Activated CD4-positive, alpha-beta memory T cell treated with anti-CD3 and anti-CD28 coated beads for 36 hours (primary cell): ENCODE measurements at regions of chr5 and their contacts with region 1.

Region 1: DNA sequence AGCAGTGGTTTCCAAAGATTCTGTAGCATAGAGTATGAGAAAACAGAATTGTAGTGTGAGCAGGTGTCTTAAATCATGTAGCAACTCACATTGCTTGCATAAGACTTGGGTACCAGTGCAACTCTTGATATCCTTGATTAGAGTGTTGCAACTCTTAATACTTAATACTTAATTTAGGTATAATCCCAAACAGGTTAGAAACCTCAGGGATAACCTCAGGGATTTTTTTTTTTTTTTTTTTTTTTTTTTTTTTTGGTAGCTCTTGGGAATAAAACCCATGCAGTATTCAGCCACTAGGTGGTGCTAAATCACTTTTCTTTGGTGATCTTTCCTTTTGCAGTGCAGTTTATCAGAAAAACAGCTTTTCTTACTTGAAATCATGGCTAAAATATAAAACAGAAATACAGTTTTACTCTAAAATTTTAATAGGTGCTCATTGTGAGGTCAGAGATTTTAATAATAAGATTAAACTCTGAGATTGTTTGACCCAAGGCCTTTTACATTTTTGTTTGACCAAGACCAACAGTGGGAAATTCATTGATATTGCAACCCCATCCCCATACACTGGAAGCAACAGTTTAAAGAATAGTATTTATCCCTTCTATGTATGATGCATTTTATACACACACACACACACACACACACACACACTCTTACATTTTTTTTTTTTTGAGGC is 55.3 kb downstream of the ERAP1 start:
- DNase-seq: no peak
- H3K4me3 Mint-ChIP-seq: no peak overlapping the region
- H3K27ac Mint-ChIP-seq: no peak overlapping the region
- H3K4me1 Mint-ChIP-seq: peaks cover 15% of the 10 kb centered on the region
- H3K27me3 Mint-ChIP-seq: no peaks in the 10 kb centered on the region

Region 2: DNA sequence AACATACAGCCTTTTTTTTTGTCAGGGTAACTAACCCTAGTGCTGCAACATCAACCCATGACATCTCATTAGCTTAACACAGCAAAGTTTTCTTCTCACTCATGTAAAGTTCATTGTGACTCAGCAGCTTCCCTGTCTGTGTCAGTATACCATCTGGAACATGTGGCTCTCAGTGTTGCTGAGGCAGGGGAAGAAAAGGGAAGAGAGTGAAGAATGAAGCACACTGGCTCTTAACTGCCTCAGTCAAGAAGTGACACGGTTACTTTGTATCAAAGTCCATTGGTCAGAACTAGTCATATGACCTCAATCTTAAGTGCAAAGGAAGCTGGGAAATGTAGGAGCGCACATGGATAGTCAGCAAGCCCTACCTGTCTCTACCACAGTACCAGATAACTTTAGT is 605.8 kb before region 1 on chr5:
- CTCF ChIA-PET with region 1: no interaction called
- POLR2A ChIA-PET with region 1: no interaction called
- intact Hi-C with region 1: no loop called
- DNase-seq: peak; percentile 30
- H3K4me3 Mint-ChIP-seq: no peak overlapping the region
- H3K27ac Mint-ChIP-seq: no peak overlapping the region
- H3K4me1 Mint-ChIP-seq: peaks cover 4% of the 10 kb centered on the region
- H3K27me3 Mint-ChIP-seq: no peaks in the 10 kb centered on the region

Region 3: DNA sequence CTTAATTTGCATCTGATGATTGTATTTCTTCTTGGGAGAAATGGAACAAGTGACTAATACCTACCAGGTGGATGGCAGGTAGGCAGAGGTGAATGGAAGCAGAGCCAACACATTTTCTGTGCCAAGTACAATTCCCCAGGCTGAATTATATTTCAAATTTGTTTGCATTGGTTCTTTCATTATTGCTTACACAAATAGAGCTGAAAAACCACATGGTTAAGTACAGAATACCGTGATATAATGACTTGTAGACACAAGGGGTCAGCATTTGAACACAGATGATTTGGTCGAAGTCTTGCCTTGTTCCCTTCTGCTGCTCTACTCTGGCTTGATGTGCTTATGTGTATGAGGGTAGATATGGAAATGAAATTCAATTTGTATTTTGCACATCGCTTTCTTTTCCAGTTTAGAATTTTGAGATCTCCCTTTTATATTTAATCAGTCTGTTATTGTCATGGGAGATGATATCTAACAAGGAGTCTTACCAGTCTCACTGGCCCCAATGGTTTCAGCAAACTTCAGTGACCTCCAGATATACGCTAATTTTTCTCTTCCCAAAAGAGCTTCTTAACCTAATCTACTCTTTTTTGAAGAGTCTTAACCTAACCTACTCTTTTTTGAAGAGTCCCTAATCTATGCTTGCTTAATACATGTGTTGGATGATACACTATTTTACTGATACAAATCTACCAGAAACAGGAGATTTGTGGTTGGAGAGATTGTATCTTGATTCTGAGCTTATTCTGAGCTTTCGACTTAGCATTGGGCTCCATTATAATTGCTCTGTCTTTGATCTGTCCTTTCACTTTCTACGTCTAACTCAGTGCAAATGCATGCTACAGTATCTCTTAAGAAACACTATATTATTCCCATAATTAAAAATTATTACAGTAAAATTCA is 407.6 kb before region 1 on chr5:
- CTCF ChIA-PET with region 1: no interaction called
- POLR2A ChIA-PET with region 1: no interaction called
- intact Hi-C with region 1: loop called (anchors 10 kb)
- DNase-seq: no peak
- H3K4me3 Mint-ChIP-seq: no peak overlapping the region
- H3K27ac Mint-ChIP-seq: no peak overlapping the region
- H3K4me1 Mint-ChIP-seq: peaks cover 27% of the 10 kb centered on the region
- H3K27me3 Mint-ChIP-seq: peaks cover 26% of the 10 kb centered on the region

Region 4: DNA sequence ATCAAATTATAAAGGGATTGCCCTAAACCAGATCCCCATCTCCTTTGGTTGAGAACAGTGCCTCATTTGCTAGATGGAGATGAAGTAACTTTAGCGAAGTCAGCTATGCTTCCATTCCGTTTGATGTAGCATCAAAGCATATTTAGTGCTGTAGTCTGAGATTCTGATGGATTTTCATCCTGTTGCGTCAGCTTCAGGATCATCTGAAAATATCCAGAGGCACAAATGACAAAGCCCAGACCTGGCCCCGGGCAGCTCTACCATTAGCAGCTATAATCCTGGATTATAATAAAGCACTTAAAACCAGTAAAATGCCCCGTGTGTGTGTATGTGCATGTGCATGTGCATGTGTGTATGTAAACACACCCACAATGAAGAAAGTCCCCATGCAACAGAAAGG is 10.5 kb after region 1 on chr5:
- CTCF ChIA-PET with region 1: interaction called, 31 read pairs
- POLR2A ChIA-PET with region 1: no interaction called
- intact Hi-C with region 1: no loop called
- DNase-seq: no peak
- H3K4me3 Mint-ChIP-seq: no peak overlapping the region
- H3K27ac Mint-ChIP-seq: no peak overlapping the region
- H3K4me1 Mint-ChIP-seq: no peaks in the 10 kb centered on the region
- H3K27me3 Mint-ChIP-seq: no peaks in the 10 kb centered on the region

Region 5: DNA sequence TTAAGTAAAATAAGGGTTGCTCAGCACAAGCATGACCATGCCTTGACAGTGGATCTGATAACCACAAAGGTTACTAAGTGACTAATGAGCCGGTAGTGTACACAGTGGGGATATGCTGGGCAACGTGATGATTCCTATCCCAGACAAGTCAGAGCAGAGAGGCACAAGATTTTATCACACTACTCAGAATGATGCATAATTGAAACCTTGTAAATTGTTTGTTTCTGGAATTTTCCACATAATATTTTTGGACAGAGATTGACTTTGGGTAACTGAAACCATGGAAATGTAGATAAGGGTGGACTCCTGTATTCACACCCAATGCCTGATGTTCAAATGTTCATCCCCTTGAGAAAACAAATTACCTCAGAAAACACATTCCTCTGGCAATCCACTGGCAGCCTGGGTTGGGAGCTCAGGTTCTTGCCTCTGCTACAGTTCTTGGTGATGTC is 71.4 kb after region 1 on chr5:
- CTCF ChIA-PET with region 1: interaction called, 6 read pairs
- POLR2A ChIA-PET with region 1: no interaction called
- intact Hi-C with region 1: loop called (anchors 1 kb)
- DNase-seq: peak; percentile 46
- H3K4me3 Mint-ChIP-seq: no peak overlapping the region
- H3K27ac Mint-ChIP-seq: no peak overlapping the region
- H3K4me1 Mint-ChIP-seq: peaks cover 46% of the 10 kb centered on the region
- H3K27me3 Mint-ChIP-seq: no peaks in the 10 kb centered on the region

Region 6: DNA sequence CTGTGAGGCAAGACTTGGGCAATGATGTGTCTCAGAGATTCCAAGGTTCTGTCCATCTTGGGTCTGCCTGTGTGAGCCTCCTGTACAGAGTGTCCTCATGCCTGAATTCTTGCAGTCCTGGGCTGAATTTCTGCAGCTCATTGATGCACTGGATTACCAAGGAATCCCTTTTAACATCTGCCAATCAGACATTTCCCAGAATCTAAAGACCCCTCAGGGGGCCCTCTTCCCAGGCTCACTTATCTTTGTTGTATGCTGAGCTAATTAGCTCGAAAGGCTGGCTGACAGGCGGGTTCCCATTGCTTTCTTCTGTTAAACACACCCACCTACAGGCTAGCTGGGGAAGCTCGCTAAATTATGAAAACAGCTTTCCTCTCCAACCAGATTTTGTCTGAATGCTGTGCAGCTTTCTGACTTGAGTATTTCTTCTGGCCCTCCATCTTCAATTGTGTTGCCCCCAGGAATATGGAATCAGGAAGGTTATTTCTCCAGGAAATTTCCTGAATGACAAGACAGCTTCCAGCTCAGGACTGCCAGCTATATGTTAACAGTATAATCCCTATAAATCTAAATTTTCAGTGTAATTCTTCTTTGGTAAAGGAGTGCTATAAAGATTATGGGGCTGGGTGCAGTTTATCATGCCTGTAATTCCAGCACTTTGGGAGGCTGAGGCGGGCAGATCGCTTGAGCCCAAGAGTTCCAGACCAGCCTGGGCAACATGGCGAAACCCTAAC is 390.2 kb after region 1 on chr5 and contains the start of gene LIX1:
- CTCF ChIA-PET with region 1: interaction called, 15 read pairs
- POLR2A ChIA-PET with region 1: no interaction called
- intact Hi-C with region 1: no loop called
- DNase-seq: peak; percentile 43
- H3K4me3 Mint-ChIP-seq: no peak within 1 kb of the TSS
- H3K27ac Mint-ChIP-seq: no peak within 1 kb of the TSS
- H3K4me1 Mint-ChIP-seq: no peaks in the 10 kb centered on the region
- H3K27me3 Mint-ChIP-seq: peaks cover 4% of the 10 kb centered on the region
- total RNA-seq, gene LIX1: not detected